Dorsolateral prefrontal cortex (tissue), 120 donors: ENCODE measurements at regions of chr19 and their contacts with region 1.

Region 1: DNA sequence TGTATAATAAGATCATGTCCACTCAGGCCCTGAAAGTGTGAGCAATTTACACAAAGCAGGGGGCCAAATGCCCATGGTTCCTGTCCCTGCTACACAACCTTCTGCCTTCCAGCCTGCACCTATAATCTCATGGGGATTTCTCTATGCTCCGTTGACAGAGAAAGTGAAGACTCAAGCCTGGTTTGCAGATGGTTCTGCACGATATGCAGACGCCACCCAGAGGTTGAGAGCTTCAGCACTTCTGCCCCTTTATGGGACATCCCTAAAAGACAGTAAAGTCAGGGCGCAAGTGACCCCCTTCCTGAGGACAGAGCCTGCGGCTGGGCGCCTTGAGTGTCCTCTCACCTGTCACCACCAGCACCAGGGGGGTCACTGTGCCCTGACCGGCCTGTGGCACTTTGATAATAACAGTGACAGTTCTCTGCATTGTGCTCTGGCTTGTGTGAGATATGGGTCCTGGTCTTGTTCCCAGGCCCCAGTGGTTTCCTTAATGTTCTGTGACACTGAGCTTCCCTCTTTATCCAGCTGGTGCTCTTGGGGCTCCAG is 15.1 kb downstream of the LILRA5 start:
- DNase-seq: no peak
- H3K4me3 ChIP-seq: no peak overlapping the region
- H3K27ac ChIP-seq: no peak overlapping the region
- H3K27me3 ChIP-seq: peaks cover 0 to 46% (median 7%) of the 10 kb centered on the region in 45 donors
- CTCF ChIP-seq: no peak

Region 2: DNA sequence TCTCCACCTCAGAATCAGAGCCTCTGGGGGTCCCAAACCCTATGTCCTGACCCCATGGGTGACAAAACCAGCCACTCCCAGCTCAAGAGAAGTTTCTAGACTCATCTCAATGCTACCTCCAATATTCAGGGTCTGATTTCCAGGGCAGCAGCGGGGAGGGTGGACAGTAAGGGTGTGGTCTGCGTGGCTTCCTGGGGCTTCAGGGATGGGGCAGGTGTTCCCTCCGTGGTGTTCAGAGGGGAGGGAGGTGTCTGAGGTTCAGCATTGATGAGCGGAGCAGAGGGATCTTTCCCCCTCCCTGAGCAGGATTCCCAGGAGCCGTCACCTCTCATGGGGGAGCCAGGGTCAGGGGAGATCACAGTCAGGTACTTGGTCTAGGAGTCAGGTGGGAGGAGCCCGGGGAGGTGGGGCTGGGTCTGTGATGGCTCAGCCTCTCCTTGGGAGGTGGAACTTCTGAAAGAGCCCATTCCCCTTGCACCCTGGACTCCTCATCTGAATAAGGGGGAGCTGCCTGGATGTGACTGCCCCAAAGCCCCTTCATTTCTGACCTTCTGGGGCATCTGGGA is 278.7 kb after region 1 on chr19:
- intact Hi-C with region 1: loop called (anchors 2 kb)
- DNase-seq: no peak
- H3K4me3 ChIP-seq: no peak overlapping the region
- H3K27ac ChIP-seq: no peak overlapping the region
- H3K27me3 ChIP-seq: peaks cover 0 to 38% (median 10%) of the 10 kb centered on the region in 45 donors
- CTCF ChIP-seq: no peak